Activated CD4-positive, alpha-beta memory T cell treated with anti-CD3 and anti-CD28 coated beads for 36 hours (primary cell): ENCODE measurements at regions of chr4 and their contacts with region 1.

Region 1: GRCh38 chr4:56655209-56655626 is 25.9 kb downstream of the HOPX start:
- DNase-seq: peak; percentile 31
- H3K4me3 Mint-ChIP-seq: peak overlapping the region; percentile 87
- H3K27ac Mint-ChIP-seq: peak overlapping the region; percentile 87
- H3K4me1 Mint-ChIP-seq: peaks cover 60% of the 10 kb centered on the region
- H3K27me3 Mint-ChIP-seq: peaks cover 38% of the 10 kb centered on the region

Region 2: GRCh38 chr4:56435306-56435926 is 219.8 kb before region 1 on chr4 and contains the start of gene PPAT:
- CTCF ChIA-PET with region 1: no interaction called
- POLR2A ChIA-PET with region 1: no interaction called
- intact Hi-C with region 1: loop called (anchors 2 kb)
- DNase-seq: peak; percentile 99
- H3K4me3 Mint-ChIP-seq: peak within 1 kb of the TSS; percentile 98
- H3K27ac Mint-ChIP-seq: peak within 1 kb of the TSS; percentile 95
- H3K4me1 Mint-ChIP-seq: peaks cover 39% of the 10 kb centered on the region
- H3K27me3 Mint-ChIP-seq: no peaks in the 10 kb centered on the region
- total RNA-seq, gene PPAT: 34.4 to 37.7 TPM

Region 3: GRCh38 chr4:56619160-56619559 is 36.1 kb before region 1 on chr4:
- CTCF ChIA-PET with region 1: interaction called, 7 read pairs
- POLR2A ChIA-PET with region 1: no interaction called
- intact Hi-C with region 1: loop called (anchors 2 kb)
- DNase-seq: peak; percentile 16
- H3K4me3 Mint-ChIP-seq: no peak overlapping the region
- H3K27ac Mint-ChIP-seq: no peak overlapping the region
- H3K4me1 Mint-ChIP-seq: no peaks in the 10 kb centered on the region
- H3K27me3 Mint-ChIP-seq: peaks cover 22% of the 10 kb centered on the region

Region 4: DNA sequence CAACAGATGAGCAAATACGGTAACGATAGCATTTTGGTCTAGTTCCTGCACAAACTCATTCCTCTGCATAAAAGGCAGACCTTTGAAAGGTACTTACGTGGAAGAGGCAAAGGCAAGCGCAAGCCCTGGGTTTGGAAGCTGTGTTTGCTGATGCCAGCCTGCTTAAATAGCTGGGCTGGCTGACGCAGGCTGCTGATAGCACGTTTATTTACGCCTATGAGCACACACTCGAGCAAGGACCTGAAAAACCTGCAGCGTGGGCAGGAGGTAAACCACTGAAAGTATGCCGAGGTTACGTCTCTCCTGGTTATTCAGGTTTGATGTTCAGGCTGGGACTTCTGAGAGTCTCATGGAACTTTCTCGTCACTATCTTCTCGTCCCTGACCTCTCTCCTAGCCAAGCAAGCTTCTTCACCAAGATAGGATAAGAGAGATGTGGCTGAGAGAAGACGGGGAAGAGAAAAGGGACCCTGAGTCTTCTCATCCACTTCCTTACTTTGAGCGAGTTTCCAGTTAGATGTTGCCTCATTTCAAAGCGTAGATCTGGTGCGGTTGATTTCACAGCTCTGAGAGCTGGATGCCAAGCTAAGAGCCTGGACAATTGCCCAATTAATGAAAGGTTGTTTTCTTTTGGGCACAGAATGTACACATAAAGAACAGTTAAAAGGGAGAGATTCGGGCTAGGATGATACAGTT is 26.1 kb after region 1 on chr4 and contains the start of gene HOPX:
- CTCF ChIA-PET with region 1: interaction called, 3 read pairs
- POLR2A ChIA-PET with region 1: interaction called, 8 read pairs
- intact Hi-C with region 1: loop called (anchors 2 kb)
- DNase-seq: peak; percentile 88
- H3K4me3 Mint-ChIP-seq: peak within 1 kb of the TSS; percentile 34
- H3K27ac Mint-ChIP-seq: peak within 1 kb of the TSS; percentile 42
- H3K4me1 Mint-ChIP-seq: peaks cover 29% of the 10 kb centered on the region
- H3K27me3 Mint-ChIP-seq: peaks cover 41% of the 10 kb centered on the region
- total RNA-seq, gene HOPX: 124 to 126 TPM

Region 5: DNA sequence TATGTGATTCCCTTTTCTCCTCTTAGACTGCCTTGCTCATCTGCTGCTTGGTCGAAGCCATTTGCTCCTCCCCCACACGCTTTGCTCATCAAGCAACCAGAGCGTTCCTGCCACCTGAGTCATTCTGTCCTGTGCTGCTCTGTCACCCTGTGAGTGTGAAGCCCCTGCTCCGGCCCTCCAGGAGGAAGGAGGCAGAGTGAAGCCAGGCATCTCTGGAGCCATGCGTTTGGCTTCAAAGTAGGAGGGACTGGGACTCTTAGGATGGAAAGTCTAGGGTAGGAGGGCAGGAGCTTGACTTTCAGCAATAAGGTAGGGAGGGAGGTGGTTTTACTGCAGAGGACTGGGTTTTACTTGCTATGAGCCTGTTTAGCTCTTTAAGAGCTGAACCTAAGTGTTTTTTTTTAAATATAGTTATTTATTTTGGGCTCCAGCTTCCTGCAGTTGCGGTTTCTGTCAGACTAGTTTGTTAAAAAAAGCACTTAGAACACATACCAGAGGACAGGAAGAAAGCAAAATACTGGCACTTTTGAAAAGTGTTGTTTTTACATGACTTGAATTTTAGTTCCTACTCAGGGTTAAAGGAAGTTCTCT is 102.7 kb after region 1 on chr4:
- CTCF ChIA-PET with region 1: no interaction called
- POLR2A ChIA-PET with region 1: no interaction called
- intact Hi-C with region 1: loop called (anchors 5 kb)
- DNase-seq: peak; percentile 90
- H3K4me3 Mint-ChIP-seq: peak overlapping the region; percentile 40
- H3K27ac Mint-ChIP-seq: peak overlapping the region; percentile 87
- H3K4me1 Mint-ChIP-seq: peaks cover 31% of the 10 kb centered on the region
- H3K27me3 Mint-ChIP-seq: peaks cover 3% of the 10 kb centered on the region

Region 6: DNA sequence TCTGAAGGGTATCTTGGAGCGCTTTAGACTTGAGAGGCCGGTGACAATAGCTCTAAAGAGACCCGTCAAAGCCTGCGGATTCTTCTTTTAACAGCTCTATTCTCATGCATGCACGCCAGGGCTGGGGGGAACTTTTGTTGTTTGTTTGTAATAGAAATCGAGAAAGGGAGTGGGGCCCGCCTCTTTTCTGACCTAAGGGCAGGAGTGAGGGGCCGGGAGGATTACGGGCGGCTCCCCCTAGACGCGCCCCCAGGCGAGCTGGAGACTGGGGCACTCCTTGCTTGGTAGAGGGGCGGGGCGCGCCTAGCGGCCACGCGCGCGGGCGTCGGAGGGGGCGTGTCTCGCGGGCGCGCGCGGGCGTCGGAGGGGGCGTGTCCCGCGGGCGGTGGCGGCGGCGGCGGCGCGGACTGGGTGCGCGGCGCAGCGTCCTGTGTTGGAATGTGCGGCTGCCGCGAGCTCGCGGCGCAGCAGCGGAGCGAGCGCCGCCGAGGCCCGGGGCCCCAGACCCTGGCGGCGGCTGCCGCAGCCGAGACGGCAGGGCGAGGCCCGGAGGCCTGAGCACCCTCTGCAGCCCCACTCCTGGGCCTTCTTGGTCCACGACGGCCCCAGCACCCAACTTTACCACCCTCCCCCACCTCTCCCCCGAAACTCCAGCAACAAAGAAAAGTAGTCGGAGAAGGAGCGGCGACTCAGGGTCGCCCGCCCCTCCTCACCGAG is 252.4 kb after region 1 on chr4 and contains the start of gene REST:
- CTCF ChIA-PET with region 1: no interaction called
- POLR2A ChIA-PET with region 1: no interaction called
- intact Hi-C with region 1: loop called (anchors 5 kb)
- DNase-seq: peak; percentile 80
- H3K4me3 Mint-ChIP-seq: peak within 1 kb of the TSS; percentile 88
- H3K27ac Mint-ChIP-seq: peak within 1 kb of the TSS; percentile 55
- H3K4me1 Mint-ChIP-seq: peaks cover 41% of the 10 kb centered on the region
- H3K27me3 Mint-ChIP-seq: no peaks in the 10 kb centered on the region
- total RNA-seq, gene REST: 46.1 to 47.0 TPM